ENCODE measurements at regions of chr13 and their contacts with region 1.

Region 1: DNA sequence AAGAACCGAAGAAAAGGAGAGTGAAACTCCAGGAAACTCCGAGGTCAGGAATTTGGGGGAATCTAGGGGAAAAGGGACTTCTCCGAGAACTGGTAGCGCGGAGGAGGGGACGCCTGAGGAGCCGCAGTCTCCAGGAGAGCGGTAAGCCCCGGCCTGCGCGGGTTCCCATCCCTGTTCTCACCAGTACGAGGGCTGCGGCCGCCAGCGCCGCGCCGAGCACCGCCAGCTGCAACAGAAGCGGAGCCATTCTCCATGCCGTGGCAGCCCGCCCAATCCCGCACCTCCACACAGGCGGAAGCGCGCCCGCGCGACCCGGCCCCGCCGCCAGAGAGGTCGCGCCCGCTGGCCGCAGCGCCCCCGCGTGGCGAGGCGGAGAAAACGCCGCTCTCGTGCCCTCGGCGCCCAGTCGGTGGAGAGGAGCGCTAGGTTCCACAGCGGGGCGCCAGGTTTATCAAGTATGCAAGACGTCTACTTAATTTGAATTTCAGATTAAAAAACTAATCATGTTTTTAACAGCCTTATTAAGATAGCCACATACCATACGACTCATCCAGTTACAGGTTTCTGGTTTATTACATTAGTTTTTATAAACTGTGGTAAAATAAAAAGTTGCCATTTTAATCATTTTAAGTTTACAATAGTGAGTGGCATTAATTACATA is at the start of gene ALG5:
- DNase-seq: peak; percentile 91 to 97 (median 94)
- H3K4me3 ChIP-seq: peak within 1 kb of the TSS; percentile 95
- H3K4me3 Mint-ChIP-seq: peak within 1 kb of the TSS; percentile 92 to 100 (median 98)
- H3K27ac ChIP-seq: peak within 1 kb of the TSS; percentile 95
- H3K27ac Mint-ChIP-seq: peak within 1 kb of the TSS; percentile 97 to 100 (median 100)
- H3K4me1 ChIP-seq: peaks cover 22% of the 10 kb centered on the region
- H3K4me1 Mint-ChIP-seq: peaks cover 45 to 49% (median 47%) of the 10 kb centered on the region in 3 donors
- H3K27me3 ChIP-seq: no peaks in the 10 kb centered on the region
- H3K27me3 Mint-ChIP-seq: peaks cover 0 to 14% of the 10 kb centered on the region in 2 donors
- total RNA-seq, gene ALG5: 46.0 to 47.9 TPM

Region 2: GRCh38 chr13:37014609-37015008 is 15.4 kb after region 1 on chr13:
- CTCF ChIA-PET with region 1: interaction called, 11 read pairs
- POLR2A ChIA-PET with region 1: interaction called, 12 read pairs
- DNase-seq: no peak
- H3K4me3 ChIP-seq: no peak overlapping the region
- H3K4me3 Mint-ChIP-seq: no peak overlapping the region
- H3K27ac ChIP-seq: no peak overlapping the region
- H3K27ac Mint-ChIP-seq: peak overlapping the region in 4 of 8 donors; percentile 10 to 30 (median 20)
- H3K4me1 ChIP-seq: no peaks in the 10 kb centered on the region
- H3K4me1 Mint-ChIP-seq: peaks cover 0 to 3% (median 0%) of the 10 kb centered on the region in 3 donors
- H3K27me3 ChIP-seq: no peaks in the 10 kb centered on the region
- H3K27me3 Mint-ChIP-seq: no peaks in the 10 kb centered on the region

Region 3: DNA sequence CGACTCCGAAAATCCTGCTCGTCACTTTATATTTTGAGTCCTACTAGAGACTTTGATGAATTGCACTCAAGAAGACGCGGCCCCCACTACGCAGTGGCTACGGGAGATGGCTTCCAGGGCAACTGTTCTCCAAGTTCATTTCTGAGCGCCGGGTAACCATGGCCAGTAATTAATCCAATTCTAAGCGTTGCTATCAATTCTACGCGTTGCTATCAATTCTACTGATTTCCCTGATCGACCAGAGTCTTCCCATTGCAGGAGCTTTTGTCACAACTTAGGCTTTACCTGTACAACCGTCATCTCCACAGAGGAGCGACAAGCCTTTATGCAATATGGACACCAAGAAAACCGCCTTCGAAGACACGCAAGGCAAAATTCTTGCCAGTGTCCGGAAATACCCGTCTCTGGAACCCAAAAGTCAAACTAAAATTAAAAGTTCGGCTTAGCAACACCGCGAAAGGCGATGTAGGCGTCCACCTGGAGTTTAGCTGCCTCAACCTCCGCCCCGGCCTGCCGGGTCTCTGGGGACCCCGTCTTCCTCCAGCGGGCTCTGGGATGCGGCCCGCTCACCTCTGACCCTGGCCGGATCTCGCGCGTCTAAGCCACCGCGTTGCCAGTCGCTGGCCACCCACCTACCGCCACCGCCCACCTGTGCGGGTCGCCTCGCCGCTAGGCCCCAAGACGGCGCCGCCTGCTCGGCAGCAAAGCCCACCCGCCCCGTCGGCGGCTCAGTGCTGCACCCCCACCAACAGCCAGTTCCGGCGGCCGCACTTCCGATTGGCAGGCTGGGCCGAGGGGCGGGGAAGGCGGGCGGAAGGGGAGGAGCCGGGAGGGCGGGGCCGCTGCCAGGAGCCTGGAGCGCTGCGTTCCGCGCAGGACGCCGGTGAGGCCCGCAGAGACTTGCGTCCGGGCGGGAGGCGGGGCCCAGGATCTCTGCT is 60.0 kb after region 1 on chr13 and contains the start of gene SUPT20H:
- CTCF ChIA-PET with region 1: interaction called, 4 read pairs
- POLR2A ChIA-PET with region 1: interaction called, 16 read pairs
- DNase-seq: peak; percentile 89 to 95 (median 91)
- H3K4me3 ChIP-seq: peak within 1 kb of the TSS; percentile 79
- H3K4me3 Mint-ChIP-seq: peak within 1 kb of the TSS; percentile 89 to 99 (median 97)
- H3K27ac ChIP-seq: peak within 1 kb of the TSS; percentile 96
- H3K27ac Mint-ChIP-seq: peak within 1 kb of the TSS; percentile 98 to 99 (median 99)
- H3K4me1 ChIP-seq: peaks cover 29% of the 10 kb centered on the region
- H3K4me1 Mint-ChIP-seq: peaks cover 29 to 61% (median 40%) of the 10 kb centered on the region in 3 donors
- H3K27me3 ChIP-seq: no peaks in the 10 kb centered on the region
- H3K27me3 Mint-ChIP-seq: no peaks in the 10 kb centered on the region
- total RNA-seq, gene SUPT20H: 51.6 to 59.6 TPM

Region 4: GRCh38 chr13:37216331-37216730 is 217.1 kb after region 1 on chr13:
- CTCF ChIA-PET with region 1: no interaction called
- POLR2A ChIA-PET with region 1: no interaction called
- DNase-seq: no peak
- H3K4me3 ChIP-seq: no peak overlapping the region
- H3K4me3 Mint-ChIP-seq: no peak overlapping the region
- H3K27ac ChIP-seq: no peak overlapping the region
- H3K27ac Mint-ChIP-seq: no peak overlapping the region
- H3K4me1 ChIP-seq: no peaks in the 10 kb centered on the region
- H3K4me1 Mint-ChIP-seq: no peaks in the 10 kb centered on the region
- H3K27me3 ChIP-seq: no peaks in the 10 kb centered on the region
- H3K27me3 Mint-ChIP-seq: no peaks in the 10 kb centered on the region

Measured in CD8-positive, alpha-beta memory T cell (primary cell).